ENCODE measurements at regions of chr14 and their contacts with region 1.

Region 1: DNA sequence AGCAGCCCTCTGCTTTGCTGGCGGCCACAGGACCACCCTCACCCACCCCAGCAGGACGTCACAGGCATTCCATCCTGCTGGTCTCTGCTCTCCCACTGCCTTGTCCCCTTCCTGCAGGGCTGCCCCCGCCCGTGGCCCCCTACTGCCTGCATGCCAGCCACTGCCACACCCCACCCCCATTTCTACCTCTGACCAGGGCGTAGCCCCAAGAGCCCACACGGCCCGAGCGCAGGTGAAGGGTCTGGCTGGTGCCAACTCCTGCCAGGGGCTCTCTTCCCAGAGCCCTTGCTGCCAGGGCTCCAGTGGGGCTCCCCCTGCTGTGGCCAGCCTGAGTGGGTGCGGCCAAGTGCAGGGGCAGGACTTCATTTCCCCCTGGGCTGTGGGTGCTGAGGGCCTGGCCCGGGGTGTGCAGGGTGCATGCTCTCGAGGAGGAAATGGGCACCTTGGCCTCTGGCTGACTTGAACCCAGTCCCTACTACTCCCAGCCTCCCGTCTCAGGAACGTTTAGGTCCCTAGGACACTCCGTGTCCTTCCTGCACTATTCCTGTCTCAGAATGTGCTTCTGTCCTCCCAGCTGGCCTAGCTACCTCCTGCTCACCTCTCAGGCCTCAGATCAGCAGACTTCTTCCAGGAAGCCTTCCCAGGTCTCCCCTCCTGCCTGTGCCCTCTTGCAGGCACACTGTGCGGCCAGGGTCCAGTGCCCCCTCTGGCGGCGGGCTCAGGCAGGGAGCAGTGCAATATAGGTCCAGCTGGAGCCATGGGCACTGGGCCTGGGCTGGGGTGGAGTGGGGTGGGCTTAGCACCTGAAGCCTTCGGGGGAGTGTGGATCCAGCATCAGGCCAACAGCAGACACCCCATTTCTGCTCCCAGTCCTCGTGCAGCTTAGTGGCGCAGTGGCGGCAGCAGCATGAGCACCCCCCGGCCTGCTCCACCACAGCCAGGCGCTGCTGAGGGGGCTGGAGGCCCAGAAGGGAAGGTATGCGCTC is 1.4 kb downstream of the LBHD2 start:
- DNase-seq: no peak
- ATAC-seq: peak; percentile 72
- H3K4me3 ChIP-seq: no peak overlapping the region
- H3K27ac ChIP-seq: no peak overlapping the region
- H3K4me1 ChIP-seq: peaks cover 0 to 50% of the 10 kb centered on the region in 2 experiments; a peak in 2 of 5 replicates
- H3K27me3 ChIP-seq: peaks cover 0 to 8% of the 10 kb centered on the region in 2 experiments; a peak in 2 of 5 replicates
- CTCF ChIP-seq: peak; percentile 41 to 49 (median 44)
- EP300 ChIP-seq: no peak
- POLR2A ChIP-seq: no peak
- RAD21 ChIP-seq: no peak

Region 2: GRCh38 chr14:102437997-102438915 is 647.1 kb before region 1 on chr14:
- CTCF ChIA-PET with region 1: no interaction called
- POLR2A ChIA-PET with region 1: no interaction called
- in situ Hi-C with region 1: no loop called
- intact Hi-C with region 1: no loop called
- DNase-seq: peak; percentile 85 to 90 (median 86)
- ATAC-seq: peak; percentile 97
- H3K4me3 ChIP-seq: no peak overlapping the region
- H3K27ac ChIP-seq: no peak overlapping the region
- H3K4me1 ChIP-seq: peaks cover 7 to 8% of the 10 kb centered on the region in 2 experiments; a peak in 4 of 5 replicates
- H3K27me3 ChIP-seq: peaks cover 0 to 4% of the 10 kb centered on the region in 2 experiments; a peak in 1 of 5 replicates
- CTCF ChIP-seq: peak; percentile 77 to 78 (median 78)
- EP300 ChIP-seq: no peak
- POLR2A ChIP-seq: no peak
- RAD21 ChIP-seq: peak; percentile 90 to 93

Region 3: DNA sequence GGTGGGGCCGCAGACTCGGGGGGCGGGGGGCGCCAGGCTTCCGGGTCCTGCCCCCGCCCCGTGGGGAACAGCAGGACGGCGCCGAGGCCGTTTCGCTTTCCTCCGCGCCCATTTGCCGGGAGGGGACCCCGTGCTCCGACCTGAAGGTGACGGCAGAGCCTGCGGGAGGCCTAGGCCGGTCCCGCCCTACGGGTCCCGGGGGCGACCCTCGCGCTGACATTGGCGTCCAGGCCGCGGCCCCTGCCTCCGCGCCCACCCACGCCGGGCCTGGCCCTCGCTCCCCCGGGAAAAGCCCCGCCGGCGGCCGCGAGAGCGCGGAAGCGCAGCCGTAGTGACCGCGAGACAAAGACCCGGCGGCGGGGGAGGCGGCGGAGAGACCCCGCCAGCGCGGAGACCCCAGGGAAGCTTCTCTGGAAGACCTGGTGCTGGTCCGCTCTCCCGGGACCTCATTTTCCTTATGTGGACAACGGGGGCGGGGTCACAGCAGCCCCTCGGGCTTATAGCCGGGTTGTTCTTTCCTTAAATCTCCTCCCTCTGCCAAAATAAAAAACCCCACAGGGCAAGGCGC is 530.1 kb before region 1 on chr14:
- CTCF ChIA-PET with region 1: no interaction called
- POLR2A ChIA-PET with region 1: no interaction called
- in situ Hi-C with region 1: no loop called
- intact Hi-C with region 1: no loop called
- DNase-seq: peak in 1 of 4 experiments; percentile 20
- ATAC-seq: no peak
- H3K4me3 ChIP-seq: no peak overlapping the region
- H3K27ac ChIP-seq: no peak overlapping the region
- H3K4me1 ChIP-seq: peaks cover 18 to 41% of the 10 kb centered on the region in 2 experiments
- H3K27me3 ChIP-seq: no peaks in the 10 kb centered on the region
- CTCF ChIP-seq: no peak
- EP300 ChIP-seq: no peak
- POLR2A ChIP-seq: no peak
- RAD21 ChIP-seq: no peak

Region 4: DNA sequence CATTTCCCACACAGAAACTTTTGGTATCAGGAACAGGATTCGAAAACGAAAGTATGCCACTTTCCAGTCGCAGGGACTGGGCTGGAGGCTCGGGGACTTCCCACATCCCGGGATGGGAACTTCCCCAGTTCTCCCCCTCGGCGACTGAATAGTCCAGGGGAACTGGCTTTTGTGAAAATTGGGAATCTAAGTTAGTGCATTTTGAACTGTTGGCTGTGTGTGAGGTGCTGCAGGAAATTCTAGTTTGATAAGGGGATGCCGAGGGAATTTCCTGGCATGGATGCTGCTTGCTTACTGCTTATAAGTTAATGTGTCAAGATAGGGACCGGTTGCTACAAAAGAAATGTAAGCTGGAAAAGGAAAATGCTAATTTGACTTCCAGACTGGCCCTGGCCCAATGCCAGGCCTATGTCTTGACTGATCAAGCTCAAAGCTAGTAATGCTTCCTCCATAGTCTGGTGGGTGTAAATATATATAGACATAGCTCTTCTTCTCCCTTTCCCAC is 175.3 kb after region 1 on chr14:
- CTCF ChIA-PET with region 1: no interaction called
- POLR2A ChIA-PET with region 1: no interaction called
- in situ Hi-C with region 1: no loop called
- intact Hi-C with region 1: no loop called
- DNase-seq: peak in 1 of 4 experiments; percentile 14
- ATAC-seq: peak; percentile 66
- H3K4me3 ChIP-seq: peak overlapping the region; percentile 39
- H3K27ac ChIP-seq: 0 out of 3 replicates have a peak overlapping the region, but pooled peaks have one; percentile 10
- H3K4me1 ChIP-seq: 0 out of 5 replicates have a peak, but pooled peaks cover 2 to 3% of the 10 kb centered on the region in 2 experiments
- H3K27me3 ChIP-seq: no peaks in the 10 kb centered on the region; a peak in 1 of 5 replicates
- CTCF ChIP-seq: no peak
- EP300 ChIP-seq: no peak
- POLR2A ChIP-seq: no peak
- RAD21 ChIP-seq: no peak

Region 5: GRCh38 chr14:103528587-103529382 is 443.4 kb after region 1 on chr14 and contains the start of gene TRMT61A:
- CTCF ChIA-PET with region 1: no interaction called
- POLR2A ChIA-PET with region 1: no interaction called
- in situ Hi-C with region 1: loop called (anchors 10 kb)
- intact Hi-C with region 1: no loop called
- DNase-seq: peak; percentile 85 to 95 (median 88)
- ATAC-seq: peak; percentile 91
- H3K4me3 ChIP-seq: peak within 1 kb of the TSS; percentile 92
- H3K27ac ChIP-seq: peak within 1 kb of the TSS; percentile 86
- H3K4me1 ChIP-seq: peaks cover 21 to 79% of the 10 kb centered on the region in 2 experiments; a peak in 4 of 5 replicates
- H3K27me3 ChIP-seq: no peaks in the 10 kb centered on the region
- CTCF ChIP-seq: no peak
- EP300 ChIP-seq: no peak
- POLR2A ChIP-seq: peak; percentile 43; the same call in 1 of the 2 replicates
- RAD21 ChIP-seq: no peak
- polyA plus RNA-seq, gene TRMT61A: 0.10 to 0.50 TPM

Measured in K562 (cell line).